ENCODE measurements at regions of chr7 and their contacts with region 1.

Region 1: GRCh38 chr7:65006094-65006992 is at the start of gene ERV3-1:
- DNase-seq: peak; percentile 96
- H3K4me3 Mint-ChIP-seq: peak within 1 kb of the TSS; percentile 95
- H3K27ac Mint-ChIP-seq: peak within 1 kb of the TSS; percentile 70
- H3K4me1 Mint-ChIP-seq: peaks cover 36% of the 10 kb centered on the region
- H3K27me3 Mint-ChIP-seq: no peaks in the 10 kb centered on the region
- total RNA-seq, gene ERV3-1: 8.2 to 8.7 TPM

Region 2: GRCh38 chr7:64665980-64666662 is 340.2 kb before region 1 on chr7 and contains the start of gene ZNF107:
- CTCF ChIA-PET with region 1: no interaction called
- POLR2A ChIA-PET with region 1: interaction called, 8 read pairs
- intact Hi-C with region 1: loop called (anchors 10 kb)
- DNase-seq: peak; percentile 94
- H3K4me3 Mint-ChIP-seq: peak within 1 kb of the TSS; percentile 90
- H3K27ac Mint-ChIP-seq: peak within 1 kb of the TSS; percentile 95
- H3K4me1 Mint-ChIP-seq: peaks cover 43% of the 10 kb centered on the region
- H3K27me3 Mint-ChIP-seq: no peaks in the 10 kb centered on the region
- total RNA-seq, gene ZNF107: 13.5 to 14.3 TPM

Region 3: GRCh38 chr7:64794171-64794844 is 212.0 kb before region 1 on chr7 and contains the start of gene ZNF138:
- CTCF ChIA-PET with region 1: no interaction called
- POLR2A ChIA-PET with region 1: interaction called, 3 read pairs
- intact Hi-C with region 1: loop called (anchors 1 kb)
- DNase-seq: peak; percentile 97
- H3K4me3 Mint-ChIP-seq: peak within 1 kb of the TSS; percentile 99
- H3K27ac Mint-ChIP-seq: peak within 1 kb of the TSS; percentile 97
- H3K4me1 Mint-ChIP-seq: peaks cover 18% of the 10 kb centered on the region
- H3K27me3 Mint-ChIP-seq: no peaks in the 10 kb centered on the region
- total RNA-seq, gene ZNF138: 10.3 to 10.5 TPM

Region 4: GRCh38 chr7:65037740-65038678 is 31.7 kb after region 1 on chr7:
- CTCF ChIA-PET with region 1: interaction called, 3 read pairs
- POLR2A ChIA-PET with region 1: interaction called, 15 read pairs
- intact Hi-C with region 1: loop called (anchors 1 kb)
- DNase-seq: peak; percentile 96
- H3K4me3 Mint-ChIP-seq: peak overlapping the region; percentile 73
- H3K27ac Mint-ChIP-seq: no peak overlapping the region
- H3K4me1 Mint-ChIP-seq: peaks cover 13% of the 10 kb centered on the region
- H3K27me3 Mint-ChIP-seq: no peaks in the 10 kb centered on the region

Region 5: GRCh38 chr7:65373608-65374351 is 367.4 kb after region 1 on chr7 and contains the start of gene ZNF92:
- CTCF ChIA-PET with region 1: no interaction called
- POLR2A ChIA-PET with region 1: no interaction called
- intact Hi-C with region 1: loop called (anchors 2 kb)
- DNase-seq: peak; percentile 98
- H3K4me3 Mint-ChIP-seq: peak within 1 kb of the TSS; percentile 95
- H3K27ac Mint-ChIP-seq: peak within 1 kb of the TSS; percentile 88
- H3K4me1 Mint-ChIP-seq: peaks cover 30% of the 10 kb centered on the region
- H3K27me3 Mint-ChIP-seq: no peaks in the 10 kb centered on the region
- total RNA-seq, gene ZNF92: 12.9 to 13.9 TPM